ENCODE measurements at regions of chr5 and their contacts with region 1.

Region 1: DNA sequence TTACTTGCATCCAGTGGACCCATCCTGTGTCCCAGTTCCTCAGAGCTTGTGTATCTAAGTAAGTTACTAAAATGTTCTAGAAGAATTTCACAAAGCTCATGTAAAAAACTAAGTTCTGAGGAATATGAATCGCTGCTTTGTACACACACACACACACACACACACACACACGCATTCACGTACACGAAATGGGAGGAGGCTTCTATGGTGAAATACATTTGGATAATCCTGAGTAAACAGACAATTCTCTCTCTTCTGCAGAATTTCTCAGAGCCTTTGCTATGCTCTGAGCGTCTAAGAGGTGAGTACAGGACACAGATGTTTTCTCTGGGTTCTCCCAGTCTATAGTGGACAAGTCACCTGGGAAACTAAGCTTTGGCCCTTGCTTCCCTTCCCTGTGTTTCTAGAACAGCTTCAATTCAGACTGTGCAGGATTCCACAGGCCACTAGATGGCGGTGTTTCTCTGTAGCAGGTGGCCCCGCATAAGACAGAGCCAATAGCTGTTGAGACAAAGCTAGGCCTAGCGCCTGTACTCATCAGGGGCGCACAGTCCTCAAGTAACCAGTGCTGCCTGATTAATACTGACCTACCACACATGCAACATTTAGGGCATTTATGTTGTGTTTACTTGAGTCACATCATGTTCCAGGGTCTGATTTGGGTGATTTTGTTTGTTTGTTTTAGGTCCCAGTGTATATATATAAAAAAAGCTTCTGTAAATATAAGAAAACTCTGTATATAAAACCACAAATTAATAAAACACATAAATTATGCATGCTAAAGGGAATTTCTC is 114.8 kb downstream of the LIFR start:
- DNase-seq: peak; percentile 60 to 90
- ATAC-seq: peak; percentile 93 to 100 (median 97)
- H3K4me3 ChIP-seq: no peak overlapping the region
- H3K4me3 Mint-ChIP-seq: no peak overlapping the region
- H3K27ac ChIP-seq: no peak overlapping the region
- H3K27ac Mint-ChIP-seq: no peak overlapping the region
- H3K4me1 ChIP-seq: no peaks in the 10 kb centered on the region
- H3K4me1 Mint-ChIP-seq: no peaks in the 10 kb centered on the region
- H3K27me3 ChIP-seq: peaks cover 2% of the 10 kb centered on the region
- H3K27me3 Mint-ChIP-seq: peaks cover 20 to 52% of the 10 kb centered on the region in 2 donors
- CTCF ChIP-seq: peak; percentile 97

Region 2: DNA sequence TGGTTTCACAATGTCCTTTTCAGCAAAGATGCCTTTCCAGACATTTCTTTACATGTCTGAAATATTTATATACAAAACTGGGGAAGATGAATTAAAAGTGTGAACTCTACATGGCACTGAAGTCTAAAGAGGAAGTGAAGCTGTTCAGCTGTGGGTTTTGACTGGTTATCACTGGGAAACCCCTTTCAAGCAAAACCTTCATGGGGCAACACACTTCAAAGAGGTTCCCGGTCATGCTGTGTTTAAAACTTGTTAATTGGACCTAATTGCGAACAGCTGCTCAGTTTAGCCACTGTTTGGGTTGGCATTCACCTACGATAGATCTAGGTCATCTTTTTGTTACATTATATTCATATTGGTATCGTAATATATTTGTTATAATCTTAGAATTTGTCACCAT is 581.8 kb before region 1 on chr5:
- intact Hi-C with region 1: no loop called
- DNase-seq: no peak
- ATAC-seq: peak in 1 of 3 donors; percentile 58
- H3K4me3 ChIP-seq: no peak overlapping the region
- H3K4me3 Mint-ChIP-seq: no peak overlapping the region
- H3K27ac ChIP-seq: no peak overlapping the region
- H3K27ac Mint-ChIP-seq: no peak overlapping the region
- H3K4me1 ChIP-seq: no peaks in the 10 kb centered on the region
- H3K4me1 Mint-ChIP-seq: peaks cover 0 to 5% of the 10 kb centered on the region in 2 donors
- H3K27me3 ChIP-seq: no peaks in the 10 kb centered on the region
- H3K27me3 Mint-ChIP-seq: peaks cover 0 to 6% of the 10 kb centered on the region in 2 donors
- CTCF ChIP-seq: no peak

Region 3: GRCh38 chr5:38414348-38414747 is 27.3 kb before region 1 on chr5:
- intact Hi-C with region 1: no loop called
- DNase-seq: no peak
- ATAC-seq: no peak
- H3K4me3 ChIP-seq: no peak overlapping the region
- H3K4me3 Mint-ChIP-seq: no peak overlapping the region
- H3K27ac ChIP-seq: no peak overlapping the region
- H3K27ac Mint-ChIP-seq: no peak overlapping the region
- H3K4me1 ChIP-seq: no peaks in the 10 kb centered on the region
- H3K4me1 Mint-ChIP-seq: no peaks in the 10 kb centered on the region
- H3K27me3 ChIP-seq: no peaks in the 10 kb centered on the region
- H3K27me3 Mint-ChIP-seq: peaks cover 0 to 27% of the 10 kb centered on the region in 2 donors
- CTCF ChIP-seq: no peak

Region 4: GRCh38 chr5:38551030-38552017 is 109.7 kb after region 1 on chr5:
- intact Hi-C with region 1: loop called (anchors 1 kb)
- DNase-seq: peak in 1 of 2 donors; percentile 36
- ATAC-seq: peak in 2 of 3 donors; percentile 28 to 41
- H3K4me3 ChIP-seq: no peak overlapping the region
- H3K4me3 Mint-ChIP-seq: no peak overlapping the region
- H3K27ac ChIP-seq: no peak overlapping the region
- H3K27ac Mint-ChIP-seq: no peak overlapping the region
- H3K4me1 ChIP-seq: peaks cover 3% of the 10 kb centered on the region
- H3K4me1 Mint-ChIP-seq: peaks cover 4 to 10% of the 10 kb centered on the region in 2 donors
- H3K27me3 ChIP-seq: peaks cover 32% of the 10 kb centered on the region
- H3K27me3 Mint-ChIP-seq: peaks cover 35 to 63% of the 10 kb centered on the region in 2 donors
- CTCF ChIP-seq: peak; percentile 21

Region 5: DNA sequence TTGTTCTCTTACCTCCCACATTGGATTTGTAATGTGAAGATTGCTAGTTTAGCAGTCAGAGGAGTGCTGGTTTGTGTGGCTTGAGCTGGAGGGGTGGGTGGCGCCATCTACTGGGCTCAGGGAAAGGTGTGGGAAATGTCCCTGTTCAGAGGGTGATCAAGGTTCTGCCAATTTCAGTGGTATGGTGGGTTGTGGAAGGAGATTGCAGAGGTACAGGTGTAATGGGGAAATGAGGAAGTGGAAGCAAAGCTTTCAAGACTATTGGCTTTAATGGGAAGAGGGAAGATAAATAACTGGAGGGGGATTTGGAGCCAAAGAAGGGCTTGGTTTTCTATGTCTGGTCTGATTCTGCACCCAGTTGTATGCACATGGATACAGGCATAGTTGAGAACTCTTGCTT is 480.5 kb after region 1 on chr5:
- intact Hi-C with region 1: loop called (anchors 1 kb)
- DNase-seq: peak; percentile 21 to 65
- ATAC-seq: peak; percentile 55 to 78 (median 63)
- H3K4me3 ChIP-seq: no peak overlapping the region
- H3K4me3 Mint-ChIP-seq: no peak overlapping the region
- H3K27ac ChIP-seq: no peak overlapping the region
- H3K27ac Mint-ChIP-seq: no peak overlapping the region
- H3K4me1 ChIP-seq: no peaks in the 10 kb centered on the region
- H3K4me1 Mint-ChIP-seq: no peaks in the 10 kb centered on the region
- H3K27me3 ChIP-seq: peaks cover 6% of the 10 kb centered on the region
- H3K27me3 Mint-ChIP-seq: peaks cover 21 to 50% of the 10 kb centered on the region in 2 donors
- CTCF ChIP-seq: peak; percentile 64

Measured in natural killer cell (primary cell).